Endothelial cell of umbilical vein (primary cell): ENCODE measurements at regions of chr4 and their contacts with region 1.

Region 1: DNA sequence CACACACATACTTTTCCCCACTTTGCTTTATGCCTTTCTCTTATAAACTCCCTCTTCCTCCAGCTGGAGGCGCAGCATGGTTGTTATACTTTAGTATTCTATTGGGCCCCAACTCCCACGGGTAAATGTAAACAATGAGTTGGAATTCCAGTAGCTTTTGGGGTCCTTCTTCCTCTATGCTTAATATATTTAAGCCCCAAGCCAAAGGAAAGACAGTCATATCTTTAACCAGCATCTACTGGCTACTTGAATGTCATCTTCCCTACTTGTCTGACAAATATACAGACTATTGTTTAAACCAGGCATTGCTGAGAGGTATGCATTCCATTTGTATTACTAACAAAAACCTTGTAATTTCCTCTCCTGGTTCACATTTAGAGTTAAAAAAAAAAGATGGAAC is 72.9 kb downstream of the WDR19 start:
- DNase-seq: peak; percentile 92
- H3K4me3 ChIP-seq: peak overlapping the region in 1 of 3 experiments; percentile 12
- H3K27ac ChIP-seq: peak overlapping the region; percentile 91
- H3K4me1 ChIP-seq: peaks cover 32% of the 10 kb centered on the region
- H3K27me3 ChIP-seq: no peaks in the 10 kb centered on the region
- CTCF ChIP-seq: peak; percentile 35 to 37
- POLR2A ChIP-seq: no peak

Region 2: DNA sequence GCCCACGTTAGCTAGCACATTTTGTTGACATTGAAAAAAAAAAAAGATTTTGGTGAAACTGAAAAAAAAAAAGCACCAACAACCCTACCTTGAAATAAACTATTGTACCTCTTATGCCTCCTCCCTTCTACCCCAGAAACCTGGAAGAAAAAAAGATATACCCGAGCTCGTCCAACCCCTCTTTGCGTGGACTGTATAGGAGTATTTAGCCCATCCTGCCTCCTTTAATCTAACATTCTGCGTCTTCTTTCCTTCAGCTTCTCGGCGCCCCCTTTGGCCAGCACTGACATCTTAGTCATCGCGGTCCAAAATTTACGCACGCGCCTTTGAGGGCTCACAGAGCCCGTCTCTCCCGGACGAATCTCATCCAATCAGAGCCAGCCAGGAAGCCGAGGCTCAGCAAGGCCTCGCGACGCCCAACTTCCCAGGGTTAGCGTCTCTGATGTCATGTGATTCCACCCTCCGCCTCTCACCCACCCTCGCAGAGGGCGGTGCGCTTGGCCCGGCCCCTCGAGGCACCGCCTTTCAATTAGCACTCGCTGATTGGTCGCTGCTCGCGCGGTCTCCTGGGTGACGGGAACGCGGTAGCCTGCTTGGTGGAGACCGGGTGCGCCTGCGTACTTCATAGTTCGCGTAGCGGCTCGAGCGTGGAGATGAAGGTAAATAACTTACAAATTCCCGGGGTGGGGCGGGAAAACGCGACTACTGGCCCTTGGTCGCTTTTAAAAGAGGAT is 73.2 kb before region 1 on chr4 and contains the start of gene WDR19:
- CTCF ChIA-PET with region 1: no interaction called
- POLR2A ChIA-PET with region 1: no interaction called
- dilution Hi-C with region 1: no loop called
- intact Hi-C with region 1: loop called (anchors 1 kb)
- DNase-seq: peak; percentile 100
- H3K4me3 ChIP-seq: peak within 1 kb of the TSS; percentile 51 to 85 (median 78)
- H3K27ac ChIP-seq: no peak within 1 kb of the TSS
- H3K4me1 ChIP-seq: peaks cover 9% of the 10 kb centered on the region
- H3K27me3 ChIP-seq: no peaks in the 10 kb centered on the region
- CTCF ChIP-seq: peak; percentile 35 to 59
- POLR2A ChIP-seq: peak; percentile 51
- total RNA-seq, gene WDR19: 28.2 and 32.7 TPM in 2 replicates

Region 3: DNA sequence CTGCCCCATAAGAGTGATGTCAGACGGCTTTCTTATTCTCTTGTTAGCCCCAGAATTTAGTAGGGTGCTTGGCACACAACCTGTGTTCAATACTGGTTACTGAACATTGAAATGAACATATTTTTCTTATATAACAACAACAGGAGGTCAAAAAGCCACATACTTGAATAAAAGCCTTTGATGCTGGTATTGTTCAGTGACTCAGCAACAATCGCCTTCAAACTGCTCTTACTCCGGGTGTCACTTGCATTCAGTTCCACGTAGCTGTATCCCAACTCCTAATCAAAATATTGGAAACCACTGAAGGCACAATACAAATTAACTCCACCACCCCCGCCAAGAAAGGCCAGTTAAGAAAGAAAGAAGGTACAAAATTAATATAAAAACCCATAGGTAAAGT is 49.4 kb after region 1 on chr4:
- CTCF ChIA-PET with region 1: interaction called, 8 read pairs
- POLR2A ChIA-PET with region 1: no interaction called
- dilution Hi-C with region 1: no loop called
- intact Hi-C with region 1: loop called (anchors 5 kb)
- DNase-seq: peak; percentile 68
- H3K4me3 ChIP-seq: no peak overlapping the region
- H3K27ac ChIP-seq: peak overlapping the region; percentile 39
- H3K4me1 ChIP-seq: peaks cover 4% of the 10 kb centered on the region
- H3K27me3 ChIP-seq: no peaks in the 10 kb centered on the region
- CTCF ChIP-seq: no peak
- POLR2A ChIP-seq: no peak

Region 4: GRCh38 chr4:39319678-39320077 is 64.4 kb after region 1 on chr4:
- CTCF ChIA-PET with region 1: no interaction called
- POLR2A ChIA-PET with region 1: no interaction called
- dilution Hi-C with region 1: no loop called
- intact Hi-C with region 1: no loop called
- DNase-seq: peak; percentile 10
- H3K4me3 ChIP-seq: no peak overlapping the region
- H3K27ac ChIP-seq: no peak overlapping the region
- H3K4me1 ChIP-seq: peaks cover 5% of the 10 kb centered on the region
- H3K27me3 ChIP-seq: no peaks in the 10 kb centered on the region
- CTCF ChIP-seq: no peak
- POLR2A ChIP-seq: no peak

Region 5: DNA sequence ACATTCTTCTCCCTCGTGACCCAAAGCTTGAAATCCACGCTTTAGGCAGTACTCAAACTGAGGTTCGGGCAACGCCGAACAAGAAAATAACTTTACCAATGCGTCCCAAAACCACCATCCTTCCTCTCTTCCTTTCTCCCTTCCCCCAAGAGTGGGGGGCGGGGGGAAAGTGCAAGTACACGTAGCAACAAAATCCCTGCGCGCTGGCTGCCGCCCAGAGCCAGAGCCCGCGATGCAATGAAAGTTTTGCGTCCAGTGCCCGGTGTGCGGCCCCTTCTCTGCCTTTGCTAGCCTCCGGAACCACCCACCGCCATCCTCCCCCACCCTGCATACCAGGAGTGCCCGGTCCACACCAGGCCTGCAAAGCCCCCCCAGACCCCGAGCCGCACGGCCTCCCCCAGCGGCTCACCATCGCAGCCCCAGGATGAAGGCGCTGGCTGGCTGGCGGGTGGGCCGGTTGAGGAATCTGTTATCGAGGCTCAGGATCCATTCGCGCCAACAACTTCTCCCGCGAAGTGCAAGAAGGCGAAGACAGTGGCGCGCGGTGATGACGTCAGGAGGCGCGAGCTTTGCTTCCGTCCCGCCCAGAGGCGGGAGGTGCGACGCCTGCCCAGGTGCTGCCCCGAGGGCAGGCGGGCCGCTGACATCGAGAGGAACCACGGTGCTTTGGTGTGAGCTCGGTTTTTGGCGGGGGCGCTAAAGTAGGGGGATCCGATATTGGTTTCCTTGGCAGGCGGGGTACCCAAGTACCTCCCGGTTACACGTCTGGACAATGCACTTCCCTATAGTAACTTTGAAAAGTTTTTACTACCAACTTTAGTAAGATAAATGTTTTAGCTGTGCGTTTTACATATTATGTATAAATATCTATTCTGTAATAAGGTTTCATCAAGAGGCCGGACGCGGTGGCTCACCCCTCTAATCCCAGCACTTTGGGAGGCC is 110.8 kb after region 1 on chr4 and contains the start of gene RFC1:
- CTCF ChIA-PET with region 1: interaction called, 4 read pairs
- POLR2A ChIA-PET with region 1: no interaction called
- dilution Hi-C with region 1: no loop called
- intact Hi-C with region 1: loop called (anchors 1 kb)
- DNase-seq: peak; percentile 85
- H3K4me3 ChIP-seq: peak within 1 kb of the TSS; percentile 80 to 95 (median 81)
- H3K27ac ChIP-seq: peak within 1 kb of the TSS; percentile 61
- H3K4me1 ChIP-seq: peaks cover 11% of the 10 kb centered on the region
- H3K27me3 ChIP-seq: no peaks in the 10 kb centered on the region
- CTCF ChIP-seq: no peak
- POLR2A ChIP-seq: peak; percentile 64
- total RNA-seq, gene RFC1: 56.2 and 57.1 TPM in 2 replicates

Region 6: DNA sequence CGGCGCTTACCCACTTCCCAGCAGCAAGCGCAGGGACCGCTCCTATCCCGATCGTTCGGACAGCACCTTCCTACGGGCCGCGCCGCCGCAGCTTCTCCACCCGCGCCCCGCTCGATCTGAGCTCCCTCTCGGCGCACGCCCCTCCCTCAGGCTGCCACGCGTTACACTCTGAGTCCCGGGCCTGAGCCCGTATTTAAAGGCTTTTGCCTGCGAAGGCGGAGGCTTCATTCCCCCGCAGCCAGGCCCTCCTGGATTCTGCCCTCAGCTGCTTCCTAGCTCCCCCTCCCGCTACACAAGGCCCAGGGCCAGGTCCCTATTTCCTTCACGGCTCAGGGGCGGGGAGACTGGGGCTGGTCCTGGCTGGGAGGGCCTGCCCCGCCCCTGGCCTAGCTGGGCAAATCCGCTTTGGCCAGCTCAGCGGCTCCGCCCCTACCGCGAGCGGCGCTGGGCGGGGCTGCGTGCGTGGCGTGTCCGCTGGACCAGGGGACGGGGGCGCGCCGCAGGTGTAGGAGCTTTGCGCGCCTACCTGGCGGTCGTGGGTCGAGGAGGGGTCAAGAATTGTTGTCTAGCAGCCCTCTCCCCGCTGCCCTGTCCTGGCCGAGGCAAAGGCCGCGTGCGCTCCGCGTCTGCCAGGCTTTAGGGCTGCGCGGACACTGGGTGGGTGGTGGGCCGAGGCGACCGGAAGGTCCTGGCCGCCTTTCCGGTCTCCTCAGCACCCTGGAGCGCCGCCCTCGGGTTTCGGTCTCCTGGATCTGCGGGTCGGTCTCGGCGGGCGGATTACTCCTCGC is 272.2 kb after region 1 on chr4 and contains the start of gene UGDH:
- CTCF ChIA-PET with region 1: no interaction called
- POLR2A ChIA-PET with region 1: no interaction called
- dilution Hi-C with region 1: no loop called
- intact Hi-C with region 1: loop called (anchors 10 kb)
- DNase-seq: peak; percentile 98
- H3K4me3 ChIP-seq: peak within 1 kb of the TSS; percentile 50 to 92 (median 60)
- H3K27ac ChIP-seq: peak within 1 kb of the TSS; percentile 90
- H3K4me1 ChIP-seq: peaks cover 12% of the 10 kb centered on the region
- H3K27me3 ChIP-seq: no peaks in the 10 kb centered on the region
- CTCF ChIP-seq: no peak
- POLR2A ChIP-seq: peak; percentile 97
- total RNA-seq, gene UGDH: 62.1 and 69.7 TPM in 2 replicates